ENCODE measurements at regions of chr15 and their contacts with region 1.

Region 1: DNA sequence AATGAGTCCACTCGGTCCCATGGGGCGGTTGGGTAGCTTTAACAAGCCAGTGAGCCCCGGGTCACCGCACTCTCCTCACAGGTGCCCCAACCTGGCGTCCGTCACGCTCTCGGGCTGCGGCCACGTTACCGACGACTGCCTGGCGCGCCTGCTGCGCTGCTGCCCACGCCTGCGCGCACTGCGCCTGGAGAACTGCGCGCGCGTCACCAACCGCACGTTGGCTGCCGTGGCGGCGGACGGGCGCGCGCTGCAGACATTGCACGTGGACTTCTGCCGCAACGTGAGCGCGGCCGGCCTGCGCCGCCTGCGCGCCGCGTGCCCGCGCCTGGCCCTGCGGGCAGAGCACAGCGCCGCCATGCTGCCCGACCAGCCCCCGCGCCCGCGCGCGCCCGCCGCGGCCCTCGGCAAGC is 3.4 kb downstream of the FBXL22 start:
- DNase-seq: peak; percentile 90
- ATAC-seq: peak; percentile 71
- H3K4me3 Mint-ChIP-seq: peak overlapping the region; percentile 91
- H3K27ac Mint-ChIP-seq: peak overlapping the region; percentile 91
- H3K4me1 Mint-ChIP-seq: peaks cover 75% of the 10 kb centered on the region
- H3K27me3 Mint-ChIP-seq: no peaks in the 10 kb centered on the region
- CTCF ChIP-seq: no peak

Region 2: DNA sequence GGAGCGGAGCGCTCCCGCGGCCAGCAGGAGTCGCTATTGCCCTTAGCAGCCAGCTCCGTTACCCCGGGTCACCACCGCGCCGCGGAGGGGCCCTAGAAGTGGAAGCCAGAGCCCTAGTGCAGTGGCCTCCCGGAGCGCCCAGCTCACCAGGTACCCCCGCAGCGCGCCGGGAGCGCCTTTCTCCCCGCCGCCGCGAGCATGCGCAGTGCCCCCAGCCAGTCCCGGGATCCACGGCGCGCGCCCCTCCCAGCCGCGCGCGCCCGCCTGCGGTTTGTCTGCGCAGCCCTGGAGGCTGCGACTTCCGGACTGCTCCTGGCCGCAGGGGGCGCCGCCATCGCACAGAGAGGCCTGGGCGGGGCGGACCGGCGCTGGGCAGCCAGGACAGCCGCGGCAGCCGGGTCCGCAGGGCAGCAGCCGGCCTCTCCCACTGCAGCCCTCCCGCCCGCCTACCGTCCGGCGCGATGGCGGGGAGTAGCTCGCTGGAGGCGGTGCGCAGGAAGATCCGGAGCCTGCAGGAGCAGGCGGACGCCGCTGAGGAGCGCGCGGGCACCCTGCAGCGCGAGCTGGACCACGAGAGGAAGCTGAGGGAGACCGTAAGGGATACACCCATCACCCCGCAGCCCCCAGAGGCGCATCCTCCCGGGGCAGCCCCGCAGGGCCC is 552.4 kb before region 1 on chr15:
- CTCF ChIA-PET with region 1: no interaction called
- POLR2A ChIA-PET with region 1: no interaction called
- intact Hi-C with region 1: loop called (anchors 5 kb)
- DNase-seq: peak; percentile 84
- ATAC-seq: peak; percentile 86
- H3K4me3 Mint-ChIP-seq: peak overlapping the region; percentile 92
- H3K27ac Mint-ChIP-seq: peak overlapping the region; percentile 53
- H3K4me1 Mint-ChIP-seq: peaks cover 22% of the 10 kb centered on the region
- H3K27me3 Mint-ChIP-seq: peaks cover 28% of the 10 kb centered on the region
- CTCF ChIP-seq: peak; percentile 73

Region 3: GRCh38 chr15:63122002-63122893 is 478.4 kb before region 1 on chr15:
- CTCF ChIA-PET with region 1: no interaction called
- POLR2A ChIA-PET with region 1: no interaction called
- intact Hi-C with region 1: loop called (anchors 1 kb)
- DNase-seq: peak; percentile 77
- ATAC-seq: peak; percentile 88
- H3K4me3 Mint-ChIP-seq: peak overlapping the region; percentile 86
- H3K27ac Mint-ChIP-seq: peak overlapping the region; percentile 86
- H3K4me1 Mint-ChIP-seq: peaks cover 15% of the 10 kb centered on the region
- H3K27me3 Mint-ChIP-seq: no peaks in the 10 kb centered on the region
- CTCF ChIP-seq: no peak

Region 4: DNA sequence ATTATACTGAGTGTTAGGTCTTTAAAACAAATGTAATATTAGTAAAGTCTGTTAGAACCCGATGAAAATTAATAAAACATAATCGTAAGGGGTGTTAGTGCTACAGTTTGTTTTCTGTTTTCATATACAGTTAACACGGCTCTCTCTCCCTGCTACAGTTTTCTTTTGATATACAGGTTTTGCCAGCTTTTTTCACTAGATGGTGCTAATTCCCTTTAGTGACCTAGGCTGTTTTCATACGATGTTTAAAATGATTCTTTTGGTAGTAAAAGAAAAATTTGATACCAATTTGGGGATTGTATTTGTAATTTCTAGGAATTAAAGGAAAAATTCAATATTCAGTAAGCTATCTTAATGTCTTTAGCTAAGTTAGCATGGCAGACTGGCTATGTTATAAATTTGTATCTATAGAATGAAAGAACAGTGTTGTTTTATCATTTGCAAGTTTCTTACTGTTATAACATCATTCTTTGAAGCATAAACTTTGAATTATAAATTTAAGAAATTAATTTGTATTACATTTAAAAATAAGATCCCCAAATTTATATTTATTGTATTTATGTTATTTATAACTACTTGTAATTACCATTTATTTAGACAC is 311.7 kb before region 1 on chr15:
- CTCF ChIA-PET with region 1: no interaction called
- POLR2A ChIA-PET with region 1: no interaction called
- intact Hi-C with region 1: loop called (anchors 10 kb)
- DNase-seq: no peak
- ATAC-seq: peak; percentile 45
- H3K4me3 Mint-ChIP-seq: no peak overlapping the region
- H3K27ac Mint-ChIP-seq: no peak overlapping the region
- H3K4me1 Mint-ChIP-seq: peaks cover 15% of the 10 kb centered on the region
- H3K27me3 Mint-ChIP-seq: no peaks in the 10 kb centered on the region
- CTCF ChIP-seq: no peak

Region 5: GRCh38 chr15:63473999-63474809 is 126.4 kb before region 1 on chr15:
- CTCF ChIA-PET with region 1: interaction called, 4 read pairs
- POLR2A ChIA-PET with region 1: interaction called, 25 read pairs
- intact Hi-C with region 1: loop called (anchors 2 kb)
- DNase-seq: peak; percentile 59
- ATAC-seq: peak; percentile 64
- H3K4me3 Mint-ChIP-seq: peak overlapping the region; percentile 83
- H3K27ac Mint-ChIP-seq: peak overlapping the region; percentile 99
- H3K4me1 Mint-ChIP-seq: peaks cover 75% of the 10 kb centered on the region
- H3K27me3 Mint-ChIP-seq: no peaks in the 10 kb centered on the region
- CTCF ChIP-seq: no peak

Region 6: GRCh38 chr15:63487076-63487757 is 113.4 kb before region 1 on chr15:
- CTCF ChIA-PET with region 1: interaction called, 5 read pairs
- POLR2A ChIA-PET with region 1: interaction called, 11 read pairs
- intact Hi-C with region 1: no loop called
- DNase-seq: peak; percentile 80
- ATAC-seq: peak; percentile 69
- H3K4me3 Mint-ChIP-seq: peak overlapping the region; percentile 75
- H3K27ac Mint-ChIP-seq: peak overlapping the region; percentile 83
- H3K4me1 Mint-ChIP-seq: peaks cover 83% of the 10 kb centered on the region
- H3K27me3 Mint-ChIP-seq: no peaks in the 10 kb centered on the region
- CTCF ChIP-seq: no peak

Region 7: DNA sequence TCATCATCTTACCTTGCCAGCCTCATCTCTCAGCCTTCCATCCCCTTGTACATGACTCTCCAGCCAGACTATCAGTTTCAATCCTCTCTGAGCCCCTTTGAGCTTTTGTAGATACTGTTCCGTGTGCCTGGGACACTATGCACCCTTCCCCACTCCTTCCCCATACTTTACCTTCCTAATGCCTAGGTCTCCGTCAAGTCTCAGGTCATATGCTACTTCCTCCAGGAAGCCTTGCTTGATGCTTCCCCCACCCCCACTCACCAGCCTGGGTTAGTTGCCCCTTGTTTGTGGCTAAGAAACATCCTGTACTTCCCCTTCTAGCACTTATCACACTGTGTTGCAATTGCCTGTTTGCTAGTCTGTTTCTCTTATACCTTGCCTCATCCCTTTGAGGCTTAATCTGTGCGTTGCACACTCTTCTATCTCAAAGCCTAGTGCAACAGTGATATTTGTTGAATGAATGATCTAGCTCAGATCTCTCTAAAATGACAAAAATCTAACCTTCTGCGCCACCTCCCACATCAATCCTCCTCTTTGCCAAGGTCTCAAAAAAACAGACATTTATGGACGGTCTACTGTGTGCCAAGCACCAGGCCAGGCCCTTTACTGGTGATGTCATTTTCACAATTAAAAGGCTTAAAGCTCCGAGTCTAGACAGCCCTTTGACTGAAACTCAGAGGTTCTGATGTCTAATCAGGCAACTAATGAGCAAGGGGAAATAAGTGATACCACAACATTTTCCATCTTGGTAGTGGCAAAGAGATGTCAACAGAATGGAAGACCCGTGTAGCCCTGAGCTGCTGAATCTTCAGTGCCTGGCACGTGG is 102.8 kb before region 1 on chr15:
- CTCF ChIA-PET with region 1: no interaction called
- POLR2A ChIA-PET with region 1: interaction called, 96 read pairs
- intact Hi-C with region 1: loop called (anchors 1 kb)
- DNase-seq: peak; percentile 64
- ATAC-seq: peak; percentile 60
- H3K4me3 Mint-ChIP-seq: no peak overlapping the region
- H3K27ac Mint-ChIP-seq: no peak overlapping the region
- H3K4me1 Mint-ChIP-seq: peaks cover 64% of the 10 kb centered on the region
- H3K27me3 Mint-ChIP-seq: no peaks in the 10 kb centered on the region
- CTCF ChIP-seq: no peak